ENCODE measurements at regions of chr1 and their contacts with region 1.

Region 1: DNA sequence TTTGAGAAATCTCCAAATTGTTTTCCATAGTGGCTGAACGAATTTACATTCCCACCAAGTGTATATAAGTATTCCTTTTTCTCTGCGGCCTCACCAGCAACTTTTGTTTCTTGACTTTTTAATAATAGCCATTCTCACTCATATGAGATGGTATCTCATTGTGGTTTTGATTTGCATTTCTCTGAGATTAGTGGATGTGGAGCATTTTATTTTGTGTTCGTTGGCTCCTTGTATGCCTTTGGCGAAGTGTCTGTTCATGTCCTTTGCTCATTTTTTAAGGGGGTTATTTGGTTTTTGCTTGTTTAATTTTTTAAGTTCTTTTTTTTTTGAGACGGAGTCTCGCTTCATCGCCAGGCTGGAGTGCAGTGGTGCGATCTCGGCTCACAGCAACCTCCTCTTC is 45.1 kb upstream of the MPC2 start:
- DNase-seq: no peak
- ATAC-seq: no peak
- H3K4me3 ChIP-seq: no peak overlapping the region
- H3K27ac ChIP-seq: no peak overlapping the region
- H3K4me1 ChIP-seq: no peaks in the 10 kb centered on the region
- H3K27me3 ChIP-seq: no peaks in the 10 kb centered on the region
- CTCF ChIP-seq: no peak

Region 2: DNA sequence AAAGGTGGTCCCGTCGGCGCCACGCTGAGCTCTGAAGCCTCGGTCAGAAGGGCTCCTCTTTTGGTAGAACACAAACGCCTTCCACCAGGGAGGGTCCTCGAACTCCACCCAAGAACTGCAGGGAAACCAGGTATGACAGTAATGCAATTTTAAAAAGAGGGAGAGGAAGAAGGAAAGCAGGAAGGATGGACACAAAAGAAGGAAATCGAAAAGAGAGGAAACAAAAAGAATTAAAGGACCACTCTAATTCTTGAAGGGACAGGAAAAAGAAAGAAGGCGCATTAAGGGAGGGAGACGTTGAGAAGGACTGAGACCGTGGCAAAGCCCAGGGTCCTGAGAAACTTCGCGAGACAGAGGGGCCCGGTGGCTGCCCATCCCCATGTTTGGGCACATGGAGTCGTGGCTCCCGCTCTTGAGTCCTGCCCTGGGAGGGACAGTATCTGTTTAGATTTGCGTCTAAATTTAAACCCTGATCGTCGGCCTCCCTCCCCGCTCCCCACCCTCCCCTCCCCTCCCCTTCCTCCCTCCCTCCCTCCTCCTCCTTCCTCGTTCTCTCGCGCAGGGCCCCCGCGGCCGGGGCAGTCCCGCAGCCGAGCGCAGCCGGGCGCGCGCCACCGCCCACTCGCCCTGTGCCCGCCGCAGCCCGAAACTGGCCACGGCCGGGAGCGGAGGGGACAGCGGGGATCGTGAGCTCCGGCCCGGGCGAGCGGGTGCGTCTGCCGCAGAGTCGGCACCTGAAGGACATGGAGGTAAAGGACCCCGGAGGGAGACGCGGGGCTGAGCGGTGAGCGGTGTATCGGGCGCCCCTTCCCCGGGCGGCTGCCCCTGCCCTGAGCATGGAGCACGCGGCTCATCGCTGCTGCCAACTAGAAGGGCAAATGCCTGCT is 352.0 kb before region 1 on chr1 and contains the start of gene RCSD1:
- CTCF ChIA-PET with region 1: no interaction called
- POLR2A ChIA-PET with region 1: no interaction called
- in situ Hi-C with region 1: no loop called
- intact Hi-C with region 1: no loop called
- DNase-seq: no peak
- ATAC-seq: peak; percentile 49
- H3K4me3 ChIP-seq: peak within 1 kb of the TSS; percentile 42 to 58
- H3K27ac ChIP-seq: peak within 1 kb of the TSS; percentile 79
- H3K4me1 ChIP-seq: peaks cover 29% of the 10 kb centered on the region
- H3K27me3 ChIP-seq: no peaks in the 10 kb centered on the region
- CTCF ChIP-seq: no peak
- total RNA-seq, gene RCSD1: 1.4 TPM

Region 3: DNA sequence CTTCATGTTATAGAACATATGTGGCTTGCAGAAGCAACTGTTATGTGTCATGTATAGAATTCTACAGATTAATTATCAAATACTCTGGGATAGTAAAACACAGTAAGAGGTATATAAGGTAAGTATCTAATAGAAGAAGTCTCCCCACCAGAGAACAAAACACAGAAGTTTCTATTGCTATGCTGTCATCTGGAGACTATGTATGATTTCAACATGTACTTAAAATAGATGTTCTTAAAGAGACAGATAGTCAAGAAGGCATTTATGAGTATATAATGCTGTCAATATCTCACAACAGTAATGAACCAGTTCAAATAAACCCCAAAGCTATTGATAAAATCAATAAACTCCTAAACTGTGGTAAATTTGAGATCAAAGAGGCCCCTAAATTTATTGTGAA is 59.9 kb before region 1 on chr1:
- CTCF ChIA-PET with region 1: no interaction called
- POLR2A ChIA-PET with region 1: no interaction called
- in situ Hi-C with region 1: no loop called
- intact Hi-C with region 1: no loop called
- DNase-seq: no peak
- ATAC-seq: no peak
- H3K4me3 ChIP-seq: no peak overlapping the region
- H3K27ac ChIP-seq: no peak overlapping the region
- H3K4me1 ChIP-seq: peaks cover 15% of the 10 kb centered on the region
- H3K27me3 ChIP-seq: no peaks in the 10 kb centered on the region
- CTCF ChIP-seq: no peak

Region 4: GRCh38 chr1:167995038-167995437 is 13.1 kb after region 1 on chr1:
- CTCF ChIA-PET with region 1: no interaction called
- POLR2A ChIA-PET with region 1: no interaction called
- in situ Hi-C with region 1: no loop called
- intact Hi-C with region 1: loop called (anchors 1 kb)
- DNase-seq: no peak
- ATAC-seq: no peak
- H3K4me3 ChIP-seq: no peak overlapping the region
- H3K27ac ChIP-seq: no peak overlapping the region
- H3K4me1 ChIP-seq: no peaks in the 10 kb centered on the region
- H3K27me3 ChIP-seq: no peaks in the 10 kb centered on the region
- CTCF ChIP-seq: no peak

Region 5: DNA sequence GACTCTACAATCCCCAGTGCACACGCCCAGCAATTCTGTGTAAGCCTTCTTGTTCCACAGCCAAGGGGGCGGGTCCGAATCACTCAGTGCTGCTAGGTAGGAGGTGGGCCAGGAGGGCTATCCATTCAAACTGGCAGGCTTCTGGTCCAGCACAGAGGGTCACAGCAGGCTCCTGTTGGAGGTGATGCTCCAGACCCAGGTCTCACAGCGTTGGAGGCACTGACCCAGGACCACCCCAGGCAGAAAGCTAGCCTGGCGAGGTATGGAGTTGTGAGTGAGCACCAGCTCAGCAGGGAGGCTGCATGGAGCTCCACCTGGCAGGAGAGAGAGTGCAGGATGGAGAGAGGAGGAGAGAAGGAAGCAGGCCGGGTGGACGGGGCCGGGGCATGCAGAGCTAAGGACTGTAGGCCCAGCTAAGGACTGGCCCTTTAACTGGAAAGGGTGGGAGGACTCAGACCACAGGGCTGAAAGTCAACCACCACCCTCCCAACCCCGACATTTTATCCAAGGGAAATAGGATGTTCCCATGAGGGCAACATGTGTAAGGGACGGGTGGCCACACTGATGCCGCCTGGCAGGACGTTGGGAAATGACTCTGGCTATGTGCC is 116.1 kb after region 1 on chr1:
- CTCF ChIA-PET with region 1: no interaction called
- POLR2A ChIA-PET with region 1: no interaction called
- in situ Hi-C with region 1: no loop called
- intact Hi-C with region 1: no loop called
- DNase-seq: no peak
- ATAC-seq: no peak
- H3K4me3 ChIP-seq: no peak overlapping the region
- H3K27ac ChIP-seq: no peak overlapping the region
- H3K4me1 ChIP-seq: no peaks in the 10 kb centered on the region
- H3K27me3 ChIP-seq: peaks cover 3% of the 10 kb centered on the region; the same call in 1 of the 2 replicates
- CTCF ChIP-seq: no peak

Measured in Panc1 (cell line).